Right ventricle myocardium inferior (tissue), 1 donor: ENCODE measurements at regions of chr5 and their contacts with region 1.

Region 1: DNA sequence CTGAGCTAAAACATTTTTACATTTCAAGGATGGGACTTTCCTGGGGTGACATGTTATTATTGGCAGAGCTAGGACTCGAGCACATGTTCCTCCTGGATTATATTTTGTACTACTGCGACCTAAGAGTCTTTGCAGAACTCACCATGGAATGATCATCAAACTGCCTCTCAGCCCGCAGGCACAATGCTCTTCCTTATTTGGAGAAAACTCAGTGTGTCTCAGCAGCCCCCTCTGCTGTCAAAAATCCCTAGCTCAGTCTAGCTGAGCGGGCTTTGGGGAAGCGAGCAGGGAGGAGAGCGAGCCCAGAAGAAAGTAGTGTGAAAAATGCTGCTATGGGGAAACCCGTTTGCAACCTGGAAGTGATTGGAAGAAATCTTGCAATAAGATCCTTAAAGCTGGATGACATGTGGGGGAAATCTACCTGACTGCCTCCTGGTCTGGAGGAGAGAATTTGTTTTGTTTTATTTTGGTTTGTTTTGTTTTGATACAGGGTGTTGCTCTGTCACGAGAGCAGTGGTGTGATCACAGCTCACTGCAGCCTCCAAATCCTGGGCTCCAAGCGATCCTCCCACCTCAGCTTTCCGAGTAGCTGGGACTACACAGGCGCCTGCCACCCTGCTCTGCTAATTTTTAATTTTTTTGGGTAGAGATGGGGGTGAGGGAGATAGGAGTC is 89.9 kb upstream of the CLINT1 start:
- DNase-seq: peak; percentile 89
- ATAC-seq: peak; percentile 99

Region 2: DNA sequence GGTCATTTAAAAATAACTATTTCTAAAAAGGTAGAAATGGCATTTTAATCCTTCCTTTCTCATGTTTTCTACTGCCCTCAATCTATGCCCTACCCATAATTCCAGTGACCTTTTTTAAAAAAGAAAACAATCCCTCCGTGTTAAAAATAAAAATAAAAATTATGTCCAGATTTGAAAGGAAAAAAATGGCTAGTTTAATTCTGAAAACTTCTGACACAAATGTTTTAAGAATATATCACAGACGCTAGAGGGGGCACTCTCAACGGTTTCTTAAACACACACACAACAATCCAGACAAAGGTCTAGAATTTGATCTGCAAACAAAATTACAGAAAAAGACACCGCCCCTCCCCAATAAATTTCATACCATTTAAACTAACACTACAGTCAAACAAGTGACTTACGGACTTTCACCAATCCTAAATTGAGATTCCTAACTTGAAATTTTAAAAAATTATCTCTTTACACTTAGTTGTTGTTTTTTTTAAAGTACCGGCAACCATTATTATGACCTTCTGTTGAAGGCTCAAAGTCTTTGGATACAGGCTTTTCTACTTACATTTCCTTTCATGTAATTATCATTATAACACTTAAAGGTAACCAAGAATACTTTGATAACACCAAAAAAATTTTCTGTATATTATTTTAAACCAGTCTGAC is 128.2 kb before region 1 on chr5:
- intact Hi-C with region 1: loop called (anchors 2 kb)
- DNase-seq: no peak
- ATAC-seq: no peak

Region 3: GRCh38 chr5:157917899-157918809 is 30.7 kb before region 1 on chr5:
- intact Hi-C with region 1: loop called (anchors 2 kb)
- DNase-seq: no peak
- ATAC-seq: peak; percentile 32

Region 4: GRCh38 chr5:157930710-157931109 is 18.2 kb before region 1 on chr5:
- intact Hi-C with region 1: no loop called
- DNase-seq: no peak
- ATAC-seq: peak; percentile 56